Activated CD4-positive, alpha-beta T cell treated with anti-CD3 and anti-CD28 coated beads, Interleukin-2, amount 10 ng/mL, durations not matched to agents 24 days and 14 days (primary cell): ENCODE measurements at regions of chr6 and their contacts with region 1.

Region 1: GRCh38 chr6:85756982-85757381 is 114.3 kb upstream of the SYNCRIP start:
- DNase-seq: no peak
- H3K4me3 Mint-ChIP-seq: no peak overlapping the region
- H3K27ac Mint-ChIP-seq: no peak overlapping the region
- H3K4me1 Mint-ChIP-seq: no peaks in the 10 kb centered on the region
- H3K27me3 Mint-ChIP-seq: peaks cover 10% of the 10 kb centered on the region

Region 2: GRCh38 chr6:86856937-86857563 is 1100.1 kb after region 1 on chr6:
- intact Hi-C with region 1: loop called (anchors 5 kb)
- DNase-seq: peak; percentile 74
- H3K4me3 Mint-ChIP-seq: no peak overlapping the region
- H3K27ac Mint-ChIP-seq: no peak overlapping the region
- H3K4me1 Mint-ChIP-seq: no peaks in the 10 kb centered on the region
- H3K27me3 Mint-ChIP-seq: no peaks in the 10 kb centered on the region

Region 3: GRCh38 chr6:87029711-87030314 is 1272.8 kb after region 1 on chr6:
- intact Hi-C with region 1: loop called (anchors 5 kb)
- DNase-seq: no peak
- H3K4me3 Mint-ChIP-seq: no peak overlapping the region
- H3K27ac Mint-ChIP-seq: no peak overlapping the region
- H3K4me1 Mint-ChIP-seq: no peaks in the 10 kb centered on the region
- H3K27me3 Mint-ChIP-seq: no peaks in the 10 kb centered on the region